ENCODE measurements at regions of chr7 and their contacts with region 1.

Region 1: GRCh38 chr7:64618785-64619456 is 47.0 kb upstream of the ZNF107 start:
- DNase-seq: no peak
- ATAC-seq: peak; percentile 59 to 81 (median 64)
- H3K4me3 ChIP-seq: no peak overlapping the region
- H3K27ac ChIP-seq: no peak overlapping the region
- H3K4me1 ChIP-seq: no peaks in the 10 kb centered on the region
- H3K27me3 ChIP-seq: no peaks in the 10 kb centered on the region
- CTCF ChIP-seq: peak; percentile 75

Region 2: GRCh38 chr7:64183126-64183742 is 435.7 kb before region 1 on chr7:
- intact Hi-C with region 1: loop called (anchors 2 to 5 kb)
- DNase-seq: peak; percentile 27 to 53
- ATAC-seq: no peak
- H3K4me3 ChIP-seq: no peak overlapping the region
- H3K27ac ChIP-seq: no peak overlapping the region
- H3K4me1 ChIP-seq: no peaks in the 10 kb centered on the region
- H3K27me3 ChIP-seq: peaks cover 0 to 16% (median 0%) of the 10 kb centered on the region in 3 donors
- CTCF ChIP-seq: peak; percentile 66

Region 3: GRCh38 chr7:64313740-64314491 is 305.0 kb before region 1 on chr7 and contains the start of gene ZNF736:
- intact Hi-C with region 1: loop called in 1 of 2 experiments (anchors 10 kb)
- DNase-seq: peak; percentile 87 to 94
- ATAC-seq: peak; percentile 100
- H3K4me3 ChIP-seq: peak within 1 kb of the TSS; percentile 68
- H3K27ac ChIP-seq: peak within 1 kb of the TSS; percentile 30
- H3K4me1 ChIP-seq: peaks cover 6% of the 10 kb centered on the region
- H3K27me3 ChIP-seq: no peaks in the 10 kb centered on the region
- CTCF ChIP-seq: no peak
- total RNA-seq, gene ZNF736: 2.9 to 8.0 (median 5.2) TPM

Region 4: GRCh38 chr7:64650971-64651781 is 32.3 kb after region 1 on chr7:
- intact Hi-C with region 1: no loop called
- DNase-seq: no peak
- ATAC-seq: no peak
- H3K4me3 ChIP-seq: no peak overlapping the region
- H3K27ac ChIP-seq: no peak overlapping the region
- H3K4me1 ChIP-seq: no peaks in the 10 kb centered on the region
- H3K27me3 ChIP-seq: no peaks in the 10 kb centered on the region
- CTCF ChIP-seq: no peak

Measured in psoas muscle (tissue), 8 donors.